ENCODE measurements at regions of chr21 and their contacts with region 1.

Region 1: DNA sequence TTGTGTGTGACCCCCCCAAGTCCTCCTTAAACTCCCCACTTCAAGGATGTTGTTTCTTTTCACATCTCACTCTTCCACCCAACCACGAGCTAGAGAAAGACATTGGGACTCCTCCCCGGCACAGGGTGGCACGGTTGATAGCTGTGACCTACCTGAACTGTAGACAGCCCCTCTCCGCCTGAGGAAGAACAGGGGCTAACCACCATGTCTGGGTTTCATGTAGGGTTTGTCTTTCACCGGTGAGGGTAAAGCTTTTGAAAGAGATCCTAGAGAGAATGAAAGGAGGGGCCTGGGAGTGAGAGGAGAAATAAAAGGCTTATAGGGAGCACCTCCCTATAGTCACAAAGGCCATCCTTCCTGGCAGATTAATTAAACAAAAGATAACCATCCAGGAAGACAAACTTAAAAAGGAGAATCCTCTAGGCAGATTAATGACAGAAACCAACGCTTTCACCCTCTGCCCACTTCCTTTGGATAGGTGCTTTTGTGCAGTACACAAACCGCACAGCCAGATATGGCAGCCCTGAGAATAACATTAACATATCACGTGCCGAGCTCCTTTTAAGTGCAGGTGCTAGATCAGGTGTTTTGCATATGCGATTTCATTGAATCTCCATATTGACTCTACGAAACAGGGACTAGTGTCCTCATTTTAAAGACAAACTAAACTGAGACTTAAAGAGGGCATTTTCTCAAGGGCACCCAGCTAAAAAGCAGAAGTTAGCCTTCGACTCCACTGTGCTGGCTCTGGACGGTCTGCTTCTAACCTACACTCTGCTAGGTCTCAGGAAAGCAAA is 178.0 kb upstream of the RUNX1 start:
- DNase-seq: peak in 7 of 9 donors; percentile 46 to 74 (median 63)
- ATAC-seq: peak; percentile 87
- H3K4me3 ChIP-seq: peak overlapping the region; percentile 43
- H3K4me3 Mint-ChIP-seq: peak overlapping the region; percentile 51 to 80 (median 70)
- H3K27ac ChIP-seq: peak overlapping the region; percentile 20
- H3K27ac Mint-ChIP-seq: peak overlapping the region; percentile 48 to 90 (median 82)
- H3K4me1 ChIP-seq: peaks cover 26 to 30% of the 10 kb centered on the region in 2 donors
- H3K4me1 Mint-ChIP-seq: peaks cover 27 to 50% (median 43%) of the 10 kb centered on the region in 7 donors
- H3K27me3 ChIP-seq: no peaks in the 10 kb centered on the region
- H3K27me3 Mint-ChIP-seq: peaks cover 0 to 6% (median 0%) of the 10 kb centered on the region in 5 donors

Region 2: DNA sequence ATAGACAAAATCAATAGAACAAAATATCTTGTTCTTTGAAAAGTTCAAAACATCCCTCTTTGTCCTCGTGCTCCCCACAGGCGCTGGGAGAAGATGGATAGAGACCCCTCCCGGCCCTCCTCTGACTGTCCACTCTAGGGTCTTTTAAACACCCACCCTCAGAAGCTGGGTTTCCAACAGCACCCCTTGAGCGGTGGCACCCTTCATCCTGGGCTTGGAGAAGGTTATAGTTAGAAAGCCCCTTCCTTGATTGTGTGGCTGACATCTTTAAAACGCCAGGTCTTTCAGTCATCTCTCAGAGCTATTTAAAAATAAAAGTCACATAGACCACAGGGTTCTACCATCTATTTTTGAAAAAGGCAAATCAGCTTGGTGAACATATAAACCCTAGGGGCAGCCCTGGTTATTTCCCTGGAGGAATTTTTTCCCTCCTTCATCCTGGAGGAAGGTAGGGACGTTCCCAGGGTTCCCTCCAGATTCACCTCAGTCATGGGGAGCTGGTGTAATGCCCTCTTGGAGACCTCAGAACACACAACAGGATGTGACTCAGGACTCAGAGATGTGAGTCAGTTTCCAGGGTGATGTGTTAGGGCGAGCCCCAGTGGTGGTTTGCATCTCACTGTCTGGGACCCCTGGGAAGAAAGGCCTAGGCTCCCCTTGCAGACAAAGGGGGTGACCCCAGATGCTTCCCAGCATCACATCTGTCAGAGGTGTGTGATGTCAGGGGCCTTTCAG is 419.8 kb before region 1 on chr21:
- CTCF ChIA-PET with region 1: no interaction called
- POLR2A ChIA-PET with region 1: no interaction called
- intact Hi-C with region 1: loop called in 1 of 2 experiments (anchors 5 kb)
- DNase-seq: peak in 2 of 9 donors; percentile 32 to 64
- ATAC-seq: peak; percentile 88
- H3K4me3 ChIP-seq: no peak overlapping the region
- H3K4me3 Mint-ChIP-seq: peak overlapping the region in 3 of 10 donors; percentile 18 to 52 (median 33)
- H3K27ac ChIP-seq: peak overlapping the region; percentile 36
- H3K27ac Mint-ChIP-seq: peak overlapping the region; percentile 28 to 91 (median 81)
- H3K4me1 ChIP-seq: peaks cover 25 to 49% of the 10 kb centered on the region in 2 donors
- H3K4me1 Mint-ChIP-seq: peaks cover 38 to 89% (median 82%) of the 10 kb centered on the region in 7 donors
- H3K27me3 ChIP-seq: no peaks in the 10 kb centered on the region
- H3K27me3 Mint-ChIP-seq: no peaks in the 10 kb centered on the region

Region 3: DNA sequence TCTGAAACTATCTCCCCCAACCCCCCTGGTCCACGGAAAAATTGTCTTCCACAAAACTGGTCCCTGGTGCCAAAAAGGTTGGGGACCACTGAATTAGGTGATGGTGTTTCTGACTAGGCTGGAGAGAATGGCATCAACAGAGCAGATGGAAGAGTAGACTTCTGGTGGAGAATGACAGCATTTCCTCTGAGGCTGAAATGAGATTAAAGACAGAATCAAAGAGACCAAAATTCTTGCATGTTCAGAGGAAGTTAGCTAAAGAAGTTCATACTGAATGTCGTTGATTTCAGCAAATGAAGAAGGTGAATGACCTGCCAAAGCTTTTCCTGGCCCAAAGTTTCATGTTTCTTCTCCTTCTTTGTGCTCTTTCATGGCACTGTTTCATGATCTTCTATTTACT is 10.1 kb after region 1 on chr21:
- CTCF ChIA-PET with region 1: no interaction called
- POLR2A ChIA-PET with region 1: no interaction called
- intact Hi-C with region 1: loop called in 1 of 2 experiments (anchors 1 kb)
- DNase-seq: peak in 6 of 9 donors; percentile 45 to 68 (median 56)
- ATAC-seq: peak; percentile 58
- H3K4me3 ChIP-seq: no peak overlapping the region
- H3K4me3 Mint-ChIP-seq: peak overlapping the region in 8 of 10 donors; percentile 3 to 68 (median 56)
- H3K27ac ChIP-seq: no peak overlapping the region
- H3K27ac Mint-ChIP-seq: peak overlapping the region in 8 of 9 donors; percentile 26 to 81 (median 71)
- H3K4me1 ChIP-seq: peaks cover 0 to 17% of the 10 kb centered on the region in 2 donors
- H3K4me1 Mint-ChIP-seq: peaks cover 16 to 49% (median 41%) of the 10 kb centered on the region in 7 donors
- H3K27me3 ChIP-seq: no peaks in the 10 kb centered on the region
- H3K27me3 Mint-ChIP-seq: peaks cover 0 to 10% (median 0%) of the 10 kb centered on the region in 5 donors

Measured in naive thymus-derived CD4-positive, alpha-beta T cell (primary cell).